Activated CD4-positive, alpha-beta T cell treated with anti-CD3 and anti-CD28 coated beads, Interleukin-2, amount 10 ng/mL, durations not matched to agents 24 days and 14 days (primary cell): ENCODE measurements at regions of chr12 and their contacts with region 1.

Region 1: GRCh38 chr12:121888478-121889266 is at the start of gene PSMD9:
- DNase-seq: peak; percentile 100
- H3K4me3 Mint-ChIP-seq: peak within 1 kb of the TSS; percentile 98
- H3K27ac Mint-ChIP-seq: peak within 1 kb of the TSS; percentile 99
- H3K4me1 Mint-ChIP-seq: peaks cover 33% of the 10 kb centered on the region
- H3K27me3 Mint-ChIP-seq: no peaks in the 10 kb centered on the region
- total RNA-seq, gene PSMD9: 63.8 and 69.9 TPM in 2 replicates

Region 2: GRCh38 chr12:121688966-121689365 is 199.7 kb before region 1 on chr12:
- intact Hi-C with region 1: loop called (anchors 2 kb)
- DNase-seq: no peak
- H3K4me3 Mint-ChIP-seq: no peak overlapping the region
- H3K27ac Mint-ChIP-seq: peak overlapping the region; percentile 34
- H3K4me1 Mint-ChIP-seq: peaks cover 4% of the 10 kb centered on the region
- H3K27me3 Mint-ChIP-seq: peaks cover 6% of the 10 kb centered on the region

Region 3: GRCh38 chr12:121712461-121713256 is 176.0 kb before region 1 on chr12 and contains the start of gene TMEM120B:
- intact Hi-C with region 1: loop called (anchors 5 kb)
- DNase-seq: peak; percentile 96
- H3K4me3 Mint-ChIP-seq: peak within 1 kb of the TSS; percentile 90
- H3K27ac Mint-ChIP-seq: peak within 1 kb of the TSS; percentile 96
- H3K4me1 Mint-ChIP-seq: peaks cover 25% of the 10 kb centered on the region
- H3K27me3 Mint-ChIP-seq: no peaks in the 10 kb centered on the region
- total RNA-seq, gene TMEM120B: 17.1 and 18.4 TPM in 2 replicates

Region 4: DNA sequence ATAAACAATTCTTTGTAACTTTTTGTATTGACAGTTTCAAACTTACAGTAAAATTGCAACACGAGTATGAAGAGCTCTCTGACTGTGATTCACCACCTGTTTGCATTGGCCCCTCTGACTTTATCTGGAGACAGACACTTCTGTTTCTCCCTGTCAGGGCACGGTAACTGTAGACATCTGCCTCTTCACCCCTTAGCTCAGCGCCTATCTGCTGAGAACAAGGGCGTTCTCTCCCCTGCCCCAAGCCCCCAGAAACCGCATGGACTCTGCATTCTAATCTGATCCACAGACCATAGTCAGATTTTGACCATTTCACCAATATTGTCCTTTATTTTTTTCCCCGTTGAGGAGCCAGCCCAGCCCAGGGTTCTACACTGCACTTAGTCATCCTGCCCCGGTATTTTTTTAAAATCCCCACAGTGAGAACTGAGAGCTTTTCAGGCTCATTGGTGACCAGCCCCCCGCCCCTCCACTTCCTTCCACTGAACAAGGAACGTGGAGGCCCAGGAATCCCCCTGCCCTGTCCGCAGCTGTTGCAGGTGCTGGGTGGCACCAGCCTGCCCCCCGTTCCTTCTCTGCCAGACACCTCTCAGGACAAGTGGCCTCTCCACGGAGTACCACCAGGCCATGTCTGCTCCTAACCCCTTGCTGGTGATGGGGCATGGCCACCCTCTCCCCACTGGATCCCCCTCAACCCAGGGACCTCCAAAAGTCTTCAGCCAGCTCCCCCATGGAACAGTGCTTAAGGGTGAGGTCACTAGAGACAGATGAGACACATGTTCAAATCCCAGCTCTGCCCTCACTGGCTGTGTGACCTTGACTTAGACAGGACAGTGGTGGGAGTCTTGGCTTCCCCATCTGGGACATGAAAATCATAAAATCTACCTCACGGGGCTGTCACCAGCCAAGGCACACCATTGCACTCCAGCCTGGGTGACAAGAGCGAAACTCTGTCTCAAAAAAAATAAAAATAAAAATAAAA is 106.4 kb before region 1 on chr12:
- intact Hi-C with region 1: loop called (anchors 2 kb)
- DNase-seq: peak; percentile 81
- H3K4me3 Mint-ChIP-seq: peak overlapping the region; percentile 79
- H3K27ac Mint-ChIP-seq: peak overlapping the region; percentile 93
- H3K4me1 Mint-ChIP-seq: peaks cover 47% of the 10 kb centered on the region
- H3K27me3 Mint-ChIP-seq: no peaks in the 10 kb centered on the region

Region 5: GRCh38 chr12:121839106-121839992 is 49.3 kb before region 1 on chr12:
- intact Hi-C with region 1: loop called (anchors 1 kb)
- DNase-seq: peak; percentile 100
- H3K4me3 Mint-ChIP-seq: peak overlapping the region; percentile 95
- H3K27ac Mint-ChIP-seq: peak overlapping the region; percentile 87
- H3K4me1 Mint-ChIP-seq: peaks cover 13% of the 10 kb centered on the region
- H3K27me3 Mint-ChIP-seq: no peaks in the 10 kb centered on the region

Region 6: DNA sequence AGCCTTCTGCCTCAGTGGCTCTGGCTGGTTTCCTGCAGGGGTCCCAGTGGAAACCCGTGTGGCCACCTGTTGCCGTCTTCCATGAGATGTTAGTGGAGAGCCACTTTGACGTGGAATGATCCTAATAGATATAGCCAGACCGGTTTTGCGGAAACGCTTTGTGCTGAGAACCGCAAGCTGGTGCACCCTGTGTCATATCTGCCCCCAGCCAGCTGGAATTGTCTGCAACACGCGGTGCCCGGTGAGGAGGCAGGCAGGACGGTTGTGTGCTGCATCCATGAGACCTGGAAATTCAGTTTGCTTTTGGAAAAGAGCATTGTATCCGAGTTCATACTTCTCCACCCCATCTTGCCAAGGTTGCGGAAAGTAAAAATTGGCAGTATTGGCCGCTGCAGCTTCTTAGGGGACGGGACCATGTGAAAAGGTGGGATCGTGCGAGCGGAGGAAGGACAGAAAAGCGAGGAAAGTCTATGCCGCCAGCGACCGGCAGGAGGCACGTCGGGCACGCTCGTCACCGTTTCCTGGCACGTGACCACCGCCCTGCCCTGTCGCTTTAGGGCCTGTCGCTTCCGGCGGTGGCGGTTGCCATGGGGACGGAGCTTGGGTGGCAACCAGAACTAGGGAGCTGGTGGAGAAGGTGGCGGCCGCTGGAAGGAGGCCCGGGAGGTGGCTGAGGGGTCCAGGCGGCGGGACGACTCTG is 29.5 kb after region 1 on chr12 and contains the start of gene CFAP251:
- intact Hi-C with region 1: loop called (anchors 2 kb)
- DNase-seq: peak; percentile 99
- H3K4me3 Mint-ChIP-seq: peak within 1 kb of the TSS; percentile 81
- H3K27ac Mint-ChIP-seq: peak within 1 kb of the TSS; percentile 92
- H3K4me1 Mint-ChIP-seq: peaks cover 16% of the 10 kb centered on the region
- H3K27me3 Mint-ChIP-seq: no peaks in the 10 kb centered on the region
- total RNA-seq, gene CFAP251: 0.85 and 1.1 TPM in 2 replicates

Region 7: GRCh38 chr12:121992059-121992879 is 103.6 kb after region 1 on chr12:
- intact Hi-C with region 1: no loop called
- DNase-seq: peak; percentile 84
- H3K4me3 Mint-ChIP-seq: peak overlapping the region; percentile 64
- H3K27ac Mint-ChIP-seq: peak overlapping the region; percentile 88
- H3K4me1 Mint-ChIP-seq: peaks cover 10% of the 10 kb centered on the region
- H3K27me3 Mint-ChIP-seq: peaks cover 12% of the 10 kb centered on the region

Region 8: GRCh38 chr12:122078141-122079032 is 189.7 kb after region 1 on chr12 and contains the start of gene MLXIP:
- intact Hi-C with region 1: loop called (anchors 5 kb)
- DNase-seq: peak; percentile 98
- H3K4me3 Mint-ChIP-seq: peak within 1 kb of the TSS; percentile 91
- H3K27ac Mint-ChIP-seq: peak within 1 kb of the TSS; percentile 88
- H3K4me1 Mint-ChIP-seq: peaks cover 41% of the 10 kb centered on the region
- H3K27me3 Mint-ChIP-seq: no peaks in the 10 kb centered on the region
- total RNA-seq, gene MLXIP: 47.6 and 48.0 TPM in 2 replicates